CD4-positive, alpha-beta memory T cell (primary cell): ENCODE measurements at regions of chr2 and their contacts with region 1.

Region 1: GRCh38 chr2:70301344-70302194 is at the start of gene FAM136A:
- DNase-seq: peak; percentile 86 to 89 (median 86)
- H3K4me3 ChIP-seq: peak within 1 kb of the TSS; percentile 72 to 80
- H3K4me3 Mint-ChIP-seq: peak within 1 kb of the TSS; percentile 84 to 97 (median 93)
- H3K27ac ChIP-seq: peak within 1 kb of the TSS; percentile 79
- H3K27ac Mint-ChIP-seq: peak within 1 kb of the TSS; percentile 77 to 94 (median 91)
- H3K4me1 ChIP-seq: peaks cover 8% of the 10 kb centered on the region
- H3K4me1 Mint-ChIP-seq: peaks cover 15 to 26% (median 22%) of the 10 kb centered on the region in 4 donors
- H3K27me3 ChIP-seq: no peaks in the 10 kb centered on the region
- H3K27me3 Mint-ChIP-seq: no peaks in the 10 kb centered on the region
- total RNA-seq, gene FAM136A: 26.2 to 27.4 TPM

Region 2: GRCh38 chr2:69914170-69914960 is 387.2 kb before region 1 on chr2:
- CTCF ChIA-PET with region 1: interaction called, 93 read pairs
- POLR2A ChIA-PET with region 1: interaction called, 18 read pairs
- intact Hi-C with region 1: loop called (anchors 1 kb)
- DNase-seq: peak; percentile 99 to 100 (median 100)
- H3K4me3 ChIP-seq: peak overlapping the region; percentile 81 to 88
- H3K4me3 Mint-ChIP-seq: peak overlapping the region; percentile 85 to 89 (median 87)
- H3K27ac ChIP-seq: peak overlapping the region; percentile 96
- H3K27ac Mint-ChIP-seq: peak overlapping the region; percentile 90 to 96 (median 94)
- H3K4me1 ChIP-seq: peaks cover 30% of the 10 kb centered on the region
- H3K4me1 Mint-ChIP-seq: peaks cover 7 to 44% (median 19%) of the 10 kb centered on the region in 4 donors
- H3K27me3 ChIP-seq: no peaks in the 10 kb centered on the region
- H3K27me3 Mint-ChIP-seq: no peaks in the 10 kb centered on the region

Region 3: DNA sequence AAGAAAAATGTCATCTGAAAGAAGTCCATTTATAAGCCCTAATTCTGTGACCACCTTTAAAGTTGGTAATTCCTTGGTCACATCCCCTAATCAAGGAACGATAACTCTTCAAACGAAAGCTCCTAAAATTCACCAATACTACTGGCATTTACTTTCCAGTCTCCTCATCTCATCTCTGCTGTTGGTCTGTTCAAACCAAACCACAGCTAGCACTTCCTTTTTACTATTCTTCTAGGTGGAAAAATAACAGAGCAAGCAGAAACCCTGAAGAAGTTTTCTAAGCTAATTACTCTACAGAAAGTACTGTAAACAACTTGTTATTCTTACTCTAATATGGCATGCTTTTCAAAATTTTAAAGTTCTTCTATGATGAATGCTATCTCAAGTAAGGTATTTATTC is 74.8 kb before region 1 on chr2:
- CTCF ChIA-PET with region 1: interaction called, 13 read pairs
- POLR2A ChIA-PET with region 1: no interaction called
- intact Hi-C with region 1: no loop called
- DNase-seq: no peak
- H3K4me3 ChIP-seq: no peak overlapping the region
- H3K4me3 Mint-ChIP-seq: no peak overlapping the region
- H3K27ac ChIP-seq: no peak overlapping the region
- H3K27ac Mint-ChIP-seq: peak overlapping the region in 3 of 7 donors; percentile 22 to 62 (median 25)
- H3K4me1 ChIP-seq: no peaks in the 10 kb centered on the region
- H3K4me1 Mint-ChIP-seq: peaks cover 0 to 4% (median 3%) of the 10 kb centered on the region in 4 donors
- H3K27me3 ChIP-seq: no peaks in the 10 kb centered on the region
- H3K27me3 Mint-ChIP-seq: no peaks in the 10 kb centered on the region

Region 4: GRCh38 chr2:70553584-70554337 is 252.2 kb after region 1 on chr2 and contains the start of gene TGFA:
- CTCF ChIA-PET with region 1: interaction called, 3 read pairs
- POLR2A ChIA-PET with region 1: no interaction called
- intact Hi-C with region 1: loop called (anchors 2 kb)
- DNase-seq: peak; percentile 63 to 73 (median 65)
- H3K4me3 ChIP-seq: peak within 1 kb of the TSS; percentile 47 to 62
- H3K4me3 Mint-ChIP-seq: peak within 1 kb of the TSS; percentile 87 to 96 (median 91)
- H3K27ac ChIP-seq: peak within 1 kb of the TSS; percentile 45
- H3K27ac Mint-ChIP-seq: peak within 1 kb of the TSS; percentile 80 to 94 (median 88)
- H3K4me1 ChIP-seq: peaks cover 26% of the 10 kb centered on the region
- H3K4me1 Mint-ChIP-seq: peaks cover 14 to 40% (median 26%) of the 10 kb centered on the region in 4 donors
- H3K27me3 ChIP-seq: peaks cover 5% of the 10 kb centered on the region
- H3K27me3 Mint-ChIP-seq: peaks cover 3 to 19% of the 10 kb centered on the region in 2 donors
- total RNA-seq, gene TGFA: 2.9 to 4.2 TPM

Region 5: GRCh38 chr2:70785137-70785911 is 483.8 kb after region 1 on chr2:
- CTCF ChIA-PET with region 1: interaction called, 6 read pairs
- POLR2A ChIA-PET with region 1: no interaction called
- intact Hi-C with region 1: loop called (anchors 2 kb)
- DNase-seq: peak in 2 of 5 donors; percentile 11 to 17
- H3K4me3 ChIP-seq: no peak overlapping the region
- H3K4me3 Mint-ChIP-seq: no peak overlapping the region
- H3K27ac ChIP-seq: no peak overlapping the region
- H3K27ac Mint-ChIP-seq: no peak overlapping the region
- H3K4me1 ChIP-seq: peaks cover 7% of the 10 kb centered on the region
- H3K4me1 Mint-ChIP-seq: peaks cover 6 to 13% (median 8%) of the 10 kb centered on the region in 4 donors
- H3K27me3 ChIP-seq: peaks cover 26% of the 10 kb centered on the region
- H3K27me3 Mint-ChIP-seq: peaks cover 26 to 37% of the 10 kb centered on the region in 2 donors

Region 6: GRCh38 chr2:70994756-70995729 is 693.5 kb after region 1 on chr2 and contains the start of gene TEX261:
- CTCF ChIA-PET with region 1: no interaction called
- POLR2A ChIA-PET with region 1: no interaction called
- intact Hi-C with region 1: loop called (anchors 2 kb)
- DNase-seq: peak; percentile 88 to 91 (median 89)
- H3K4me3 ChIP-seq: peak within 1 kb of the TSS; percentile 68 to 87
- H3K4me3 Mint-ChIP-seq: peak within 1 kb of the TSS; percentile 95 to 99 (median 96)
- H3K27ac ChIP-seq: peak within 1 kb of the TSS; percentile 81
- H3K27ac Mint-ChIP-seq: peak within 1 kb of the TSS; percentile 91 to 98 (median 95)
- H3K4me1 ChIP-seq: peaks cover 26% of the 10 kb centered on the region
- H3K4me1 Mint-ChIP-seq: peaks cover 24 to 40% (median 32%) of the 10 kb centered on the region in 4 donors
- H3K27me3 ChIP-seq: no peaks in the 10 kb centered on the region
- H3K27me3 Mint-ChIP-seq: no peaks in the 10 kb centered on the region
- total RNA-seq, gene TEX261: 61.1 to 70.0 TPM